Panc1 (cell line): ENCODE measurements at regions of chr7 and their contacts with region 1.

Region 1: DNA sequence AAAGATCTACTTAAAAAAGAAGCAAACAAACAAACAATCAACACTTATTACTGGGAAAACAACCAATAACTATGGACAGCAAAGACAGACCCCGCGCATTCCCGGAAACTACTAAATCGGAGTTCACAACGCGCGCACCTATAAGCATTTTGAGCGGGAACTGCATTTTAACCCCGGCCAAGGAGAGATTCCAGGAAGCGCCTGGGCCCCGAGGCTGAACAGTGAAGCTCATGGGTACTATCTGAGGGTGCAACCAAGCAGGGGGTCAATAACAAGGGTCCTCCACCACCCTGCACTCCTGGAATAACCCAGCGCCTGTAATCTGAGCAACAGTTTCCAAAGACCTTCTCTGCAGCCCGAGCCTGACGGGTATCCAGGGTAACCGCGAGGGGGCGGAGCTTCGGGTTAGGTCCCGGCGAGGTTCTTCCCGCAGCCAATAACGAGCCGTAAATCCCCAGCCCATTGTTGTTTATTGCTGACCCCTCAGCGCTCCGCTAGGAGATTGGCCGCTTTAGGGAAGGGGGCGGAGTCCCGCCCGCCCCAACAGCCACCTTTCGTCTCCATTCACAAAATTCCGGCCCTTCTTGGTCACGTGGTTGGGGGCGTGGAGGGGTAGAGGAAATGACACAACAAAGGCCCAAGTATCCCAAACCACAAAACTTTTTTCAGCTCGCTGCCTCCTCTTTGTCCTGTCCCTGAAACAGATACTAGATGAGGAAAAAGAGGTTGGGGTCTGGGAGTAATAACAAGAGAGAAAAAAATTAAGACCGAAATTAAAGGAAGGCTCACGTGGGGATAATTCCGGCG is 1.7 kb upstream of the ETV1 start:
- DNase-seq: peak; percentile 99
- ATAC-seq: peak; percentile 95
- H3K4me3 ChIP-seq: peak overlapping the region; percentile 66 to 88
- H3K27ac ChIP-seq: peak overlapping the region; percentile 73
- H3K4me1 ChIP-seq: peaks cover 8% of the 10 kb centered on the region
- H3K27me3 ChIP-seq: no peaks in the 10 kb centered on the region
- CTCF ChIP-seq: no peak

Region 2: GRCh38 chr7:13279854-13280435 is 711.2 kb before region 1 on chr7:
- CTCF ChIA-PET with region 1: no interaction called
- POLR2A ChIA-PET with region 1: no interaction called
- in situ Hi-C with region 1: no loop called
- intact Hi-C with region 1: loop called (anchors 10 kb)
- DNase-seq: no peak
- ATAC-seq: no peak
- H3K4me3 ChIP-seq: no peak overlapping the region
- H3K27ac ChIP-seq: no peak overlapping the region
- H3K4me1 ChIP-seq: no peaks in the 10 kb centered on the region
- H3K27me3 ChIP-seq: no peaks in the 10 kb centered on the region
- CTCF ChIP-seq: peak; percentile 9; the same call in 1 of the 2 replicates

Region 3: GRCh38 chr7:13945670-13946069 is 45.5 kb before region 1 on chr7:
- CTCF ChIA-PET with region 1: no interaction called
- POLR2A ChIA-PET with region 1: no interaction called
- in situ Hi-C with region 1: no loop called
- intact Hi-C with region 1: no loop called
- DNase-seq: no peak
- ATAC-seq: no peak
- H3K4me3 ChIP-seq: no peak overlapping the region
- H3K27ac ChIP-seq: no peak overlapping the region
- H3K4me1 ChIP-seq: no peaks in the 10 kb centered on the region
- H3K27me3 ChIP-seq: no peaks in the 10 kb centered on the region
- CTCF ChIP-seq: no peak

Region 4: GRCh38 chr7:14021069-14021468 is 29.9 kb after region 1 on chr7:
- CTCF ChIA-PET with region 1: interaction called, 14 read pairs
- POLR2A ChIA-PET with region 1: no interaction called
- in situ Hi-C with region 1: no loop called
- intact Hi-C with region 1: no loop called
- DNase-seq: no peak
- ATAC-seq: no peak
- H3K4me3 ChIP-seq: no peak overlapping the region
- H3K27ac ChIP-seq: no peak overlapping the region
- H3K4me1 ChIP-seq: no peaks in the 10 kb centered on the region
- H3K27me3 ChIP-seq: no peaks in the 10 kb centered on the region
- CTCF ChIP-seq: no peak

Region 5: GRCh38 chr7:14197280-14197679 is 206.1 kb after region 1 on chr7:
- CTCF ChIA-PET with region 1: interaction called, 12 read pairs
- POLR2A ChIA-PET with region 1: no interaction called
- in situ Hi-C with region 1: no loop called
- intact Hi-C with region 1: no loop called
- DNase-seq: no peak
- ATAC-seq: no peak
- H3K4me3 ChIP-seq: no peak overlapping the region
- H3K27ac ChIP-seq: no peak overlapping the region
- H3K4me1 ChIP-seq: no peaks in the 10 kb centered on the region
- H3K27me3 ChIP-seq: no peaks in the 10 kb centered on the region
- CTCF ChIP-seq: no peak

Region 6: DNA sequence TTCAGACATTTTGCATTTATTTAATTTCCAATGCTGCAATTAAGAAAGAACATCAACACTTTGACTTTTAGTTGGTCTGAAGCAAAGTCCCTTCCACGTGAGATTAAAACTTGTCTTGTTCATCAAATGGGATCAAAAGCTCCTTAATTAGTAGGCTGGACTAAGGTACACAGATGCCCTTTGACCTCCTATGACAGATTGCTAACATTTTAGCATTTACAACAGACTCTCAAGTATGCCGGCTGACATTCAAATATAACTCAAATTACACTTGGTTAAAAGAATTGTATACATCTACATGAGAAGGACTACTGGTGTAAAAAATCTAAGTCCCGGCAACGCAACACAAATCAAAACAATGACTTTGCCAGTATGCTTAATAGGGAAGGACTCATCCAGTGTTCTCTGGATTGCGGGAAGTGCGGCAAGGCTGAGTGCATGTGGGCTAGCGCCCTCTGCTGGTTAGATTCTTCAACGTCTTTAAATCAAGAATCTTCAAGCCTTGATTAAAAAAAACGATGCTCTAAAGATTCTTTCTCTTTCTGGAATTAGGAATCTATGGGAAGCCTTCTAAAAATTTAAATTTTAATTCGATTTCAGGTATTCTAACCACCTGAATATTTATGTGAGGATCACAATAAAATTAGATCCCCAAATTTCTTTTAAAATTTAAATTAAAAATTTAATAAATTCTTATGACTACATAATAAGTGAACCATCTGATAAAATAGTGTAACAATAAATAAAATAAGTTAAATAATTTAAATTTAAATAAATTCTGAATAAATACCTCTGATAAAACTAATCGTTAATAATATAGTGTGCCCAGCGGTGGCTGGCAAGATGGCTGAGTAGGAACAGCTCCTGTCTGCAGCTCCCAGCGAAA is 466.6 kb after region 1 on chr7:
- CTCF ChIA-PET with region 1: no interaction called
- POLR2A ChIA-PET with region 1: no interaction called
- in situ Hi-C with region 1: no loop called
- intact Hi-C with region 1: loop called (anchors 5 kb)
- DNase-seq: peak; percentile 79
- ATAC-seq: peak; percentile 78
- H3K4me3 ChIP-seq: no peak overlapping the region; a peak in 1 of 4 replicates
- H3K27ac ChIP-seq: no peak overlapping the region
- H3K4me1 ChIP-seq: no peaks in the 10 kb centered on the region
- H3K27me3 ChIP-seq: no peaks in the 10 kb centered on the region
- CTCF ChIP-seq: peak; percentile 93

Region 7: DNA sequence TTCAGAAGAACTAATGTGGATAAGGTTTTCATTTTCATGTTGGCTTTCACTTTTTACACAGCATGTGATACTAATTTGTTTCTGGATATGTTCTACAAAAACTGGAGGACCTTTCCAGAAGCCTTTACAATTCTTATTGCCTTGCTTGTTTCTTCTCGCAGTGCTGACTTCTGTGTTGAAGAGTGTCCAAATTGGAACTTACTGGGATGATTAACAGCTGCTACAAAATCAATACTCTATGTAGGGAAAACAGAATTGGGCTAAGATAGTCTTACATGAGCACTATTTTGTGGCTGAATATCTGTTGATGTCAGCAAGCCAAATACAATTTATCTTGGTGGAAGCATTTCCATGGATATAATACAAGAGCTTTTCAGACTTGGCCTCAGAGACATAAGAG is 560.1 kb after region 1 on chr7:
- CTCF ChIA-PET with region 1: interaction called, 13 read pairs
- POLR2A ChIA-PET with region 1: no interaction called
- in situ Hi-C with region 1: no loop called
- intact Hi-C with region 1: no loop called
- DNase-seq: no peak
- ATAC-seq: no peak
- H3K4me3 ChIP-seq: no peak overlapping the region
- H3K27ac ChIP-seq: no peak overlapping the region
- H3K4me1 ChIP-seq: no peaks in the 10 kb centered on the region
- H3K27me3 ChIP-seq: no peaks in the 10 kb centered on the region
- CTCF ChIP-seq: no peak

Region 8: DNA sequence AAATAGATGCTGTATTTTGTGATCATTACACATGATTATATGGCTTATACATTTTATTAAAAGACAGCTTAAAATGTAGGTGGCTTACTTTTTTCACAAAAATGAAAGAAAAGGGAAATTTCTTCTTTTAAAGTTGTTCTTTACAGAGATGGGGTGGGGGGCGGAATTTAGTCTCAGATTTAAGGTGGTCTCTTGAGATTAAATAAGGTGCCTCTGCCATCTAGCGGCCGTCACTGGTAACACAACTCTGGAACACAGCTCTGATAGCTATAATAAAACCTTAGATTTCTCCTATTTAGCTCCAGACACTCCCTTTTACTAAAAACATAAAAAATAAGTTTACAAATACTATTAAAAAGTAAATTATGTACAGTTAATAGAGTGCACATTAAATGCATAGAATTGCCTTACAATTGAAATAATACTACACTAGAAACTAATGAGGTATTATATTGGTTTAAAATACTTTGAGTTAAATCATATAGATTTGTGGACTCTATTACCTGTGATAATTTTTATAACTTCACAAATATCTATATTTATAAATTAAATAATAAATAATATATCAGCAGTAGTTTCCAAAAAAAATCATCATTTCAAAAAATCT is 700.5 kb after region 1 on chr7:
- CTCF ChIA-PET with region 1: interaction called, 3 read pairs
- POLR2A ChIA-PET with region 1: no interaction called
- in situ Hi-C with region 1: no loop called
- intact Hi-C with region 1: loop called (anchors 10 kb)
- DNase-seq: no peak
- ATAC-seq: no peak
- H3K4me3 ChIP-seq: no peak overlapping the region
- H3K27ac ChIP-seq: no peak overlapping the region
- H3K4me1 ChIP-seq: no peaks in the 10 kb centered on the region
- H3K27me3 ChIP-seq: no peaks in the 10 kb centered on the region
- CTCF ChIP-seq: peak; percentile 87; the same call in 1 of the 2 replicates